ENCODE measurements at regions of chr11 and their contacts with region 1.

Region 1: DNA sequence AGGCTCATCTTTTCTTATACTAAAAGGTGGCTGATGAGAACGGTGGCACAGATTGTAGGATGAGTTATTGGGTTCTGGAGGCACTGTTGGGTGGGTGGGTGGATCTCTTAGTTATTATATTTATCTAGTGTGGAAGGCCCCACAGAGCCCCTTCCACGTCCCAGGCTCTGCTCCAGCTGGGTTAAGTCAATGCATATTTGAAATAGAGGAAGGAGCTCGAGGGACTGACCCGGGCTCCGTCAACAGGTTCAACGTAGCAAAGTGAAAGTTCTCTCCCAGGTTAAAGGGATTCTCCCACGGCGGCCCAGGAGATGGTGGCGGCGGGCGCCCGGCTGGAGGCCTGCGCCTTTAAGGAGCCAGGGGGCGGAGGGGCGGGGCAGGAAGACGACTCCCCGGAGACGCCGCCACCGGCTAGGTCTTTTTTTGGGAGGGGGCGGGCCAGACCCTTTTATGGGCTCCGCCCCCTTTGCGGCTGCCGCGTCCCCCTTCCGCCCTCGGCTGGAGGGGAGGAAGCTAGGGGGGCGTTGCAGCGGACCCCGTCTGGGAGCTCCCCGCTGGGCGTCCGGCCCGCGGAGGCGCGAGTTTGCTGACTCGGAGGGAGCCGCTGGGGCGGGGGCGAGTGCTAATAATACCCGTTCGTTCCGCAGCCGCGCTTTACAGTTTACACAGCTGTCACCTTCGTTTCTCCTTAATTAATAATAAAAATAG is 1.5 kb upstream of the INPPL1 start:
- DNase-seq: peak; percentile 97

Region 2: GRCh38 chr11:71580057-71581003 is 642.7 kb before region 1 on chr11:
- intact Hi-C with region 1: no loop called
- DNase-seq: no peak

Region 3: GRCh38 chr11:72814286-72815109 is 591.4 kb after region 1 on chr11 and contains the start of gene ATG16L2:
- intact Hi-C with region 1: loop called (anchors 10 kb)
- DNase-seq: peak; percentile 96
- total RNA-seq, gene ATG16L2: 21.4 TPM

Measured in cardiac septum (tissue), 1 donor.